HepG2 (cell line): ENCODE measurements at regions of chr10 and their contacts with region 1.

Region 1: GRCh38 chr10:46022978-46023702 is 7.3 kb downstream of the NCOA4 start:
- DNase-seq: peak; percentile 92
- ATAC-seq: peak; percentile 93
- H3K4me3 ChIP-seq: peak overlapping the region; percentile 88 to 92 (median 89)
- H3K27ac ChIP-seq: peak overlapping the region; percentile 86
- H3K4me1 ChIP-seq: peaks cover 69% of the 10 kb centered on the region
- H3K27me3 ChIP-seq: no peaks in the 10 kb centered on the region; a peak in 1 of 5 replicates
- CTCF ChIP-seq: peak; percentile 80
- EP300 ChIP-seq: no peak
- POLR2A ChIP-seq: peak; percentile 97 to 99
- RAD21 ChIP-seq: peak; percentile 68

Region 2: DNA sequence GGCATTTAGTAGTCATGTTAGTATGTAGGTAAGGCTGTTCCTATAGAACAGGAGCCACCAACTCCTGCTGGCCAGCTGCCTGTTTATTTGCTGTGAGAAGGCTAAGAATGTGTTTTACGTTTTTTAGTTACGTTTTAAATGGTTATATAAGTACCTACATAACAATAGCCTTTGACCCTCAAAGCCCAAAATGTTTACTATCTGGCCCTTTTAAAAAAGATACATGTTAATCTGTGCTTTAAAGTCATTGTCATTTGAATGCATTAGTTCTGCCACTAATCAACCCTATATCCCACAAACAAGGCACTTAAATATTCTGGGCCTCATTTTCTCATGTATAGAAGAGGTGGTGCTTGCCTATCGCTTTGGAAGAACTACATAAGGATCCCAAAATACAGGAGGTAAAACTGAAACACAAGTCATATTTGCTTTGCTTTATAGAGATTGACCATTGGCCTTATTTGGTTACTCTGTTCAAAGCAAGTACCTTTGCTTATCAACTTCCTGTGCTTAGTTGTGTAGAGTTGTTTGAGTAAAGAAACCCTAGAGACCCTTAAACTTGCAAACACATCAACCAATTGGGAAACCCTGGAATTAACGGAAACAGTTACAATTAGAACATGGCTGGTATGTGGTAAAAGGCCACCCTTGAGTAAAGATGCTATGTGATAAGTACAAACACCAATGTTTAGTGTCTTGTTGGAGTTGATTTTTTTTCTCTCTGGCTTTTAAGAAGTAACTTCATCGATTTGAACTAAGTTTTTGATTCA is 25.0 kb before region 1 on chr10:
- CTCF ChIA-PET with region 1: no interaction called
- POLR2A ChIA-PET with region 1: interaction called, 147 read pairs
- in situ Hi-C with region 1: no loop called
- intact Hi-C with region 1: loop called (anchors 1 kb)
- DNase-seq: peak; percentile 98
- ATAC-seq: peak; percentile 87
- H3K4me3 ChIP-seq: peak overlapping the region in 1 of 3 experiments; percentile 2; a peak in 1 of 6 replicates
- H3K27ac ChIP-seq: peak overlapping the region; percentile 77
- H3K4me1 ChIP-seq: peaks cover 72% of the 10 kb centered on the region
- H3K27me3 ChIP-seq: no peaks in the 10 kb centered on the region
- CTCF ChIP-seq: no peak
- EP300 ChIP-seq: peak; percentile 56 to 99; a peak in 3 of 4 replicates
- POLR2A ChIP-seq: no peak
- RAD21 ChIP-seq: no peak; the same call in 1 of the 2 replicates

Region 3: DNA sequence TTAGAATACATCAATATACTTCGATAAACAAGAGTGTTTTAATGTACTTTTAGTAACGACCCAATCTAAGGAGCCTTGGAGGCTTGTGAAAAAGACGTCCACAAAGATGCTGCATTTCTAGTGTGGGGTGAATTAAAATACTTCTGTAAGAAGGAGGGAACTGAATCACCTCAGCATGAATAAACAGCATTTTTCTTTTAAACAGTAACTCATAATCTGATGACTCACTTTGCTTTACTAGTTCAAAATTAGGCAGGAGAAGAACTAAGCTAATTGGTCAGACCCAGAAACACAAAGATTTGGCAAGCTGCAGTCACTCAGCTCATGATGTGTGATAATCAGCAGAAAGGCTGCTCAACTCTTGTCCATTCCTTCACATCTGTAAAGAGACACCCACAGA is 16.9 kb before region 1 on chr10:
- CTCF ChIA-PET with region 1: no interaction called
- POLR2A ChIA-PET with region 1: interaction called, 147 read pairs
- in situ Hi-C with region 1: no loop called
- intact Hi-C with region 1: no loop called
- DNase-seq: no peak
- ATAC-seq: no peak
- H3K4me3 ChIP-seq: no peak overlapping the region
- H3K27ac ChIP-seq: no peak overlapping the region
- H3K4me1 ChIP-seq: peaks cover 71% of the 10 kb centered on the region
- H3K27me3 ChIP-seq: no peaks in the 10 kb centered on the region
- CTCF ChIP-seq: no peak
- EP300 ChIP-seq: no peak
- POLR2A ChIP-seq: no peak
- RAD21 ChIP-seq: no peak

Region 4: DNA sequence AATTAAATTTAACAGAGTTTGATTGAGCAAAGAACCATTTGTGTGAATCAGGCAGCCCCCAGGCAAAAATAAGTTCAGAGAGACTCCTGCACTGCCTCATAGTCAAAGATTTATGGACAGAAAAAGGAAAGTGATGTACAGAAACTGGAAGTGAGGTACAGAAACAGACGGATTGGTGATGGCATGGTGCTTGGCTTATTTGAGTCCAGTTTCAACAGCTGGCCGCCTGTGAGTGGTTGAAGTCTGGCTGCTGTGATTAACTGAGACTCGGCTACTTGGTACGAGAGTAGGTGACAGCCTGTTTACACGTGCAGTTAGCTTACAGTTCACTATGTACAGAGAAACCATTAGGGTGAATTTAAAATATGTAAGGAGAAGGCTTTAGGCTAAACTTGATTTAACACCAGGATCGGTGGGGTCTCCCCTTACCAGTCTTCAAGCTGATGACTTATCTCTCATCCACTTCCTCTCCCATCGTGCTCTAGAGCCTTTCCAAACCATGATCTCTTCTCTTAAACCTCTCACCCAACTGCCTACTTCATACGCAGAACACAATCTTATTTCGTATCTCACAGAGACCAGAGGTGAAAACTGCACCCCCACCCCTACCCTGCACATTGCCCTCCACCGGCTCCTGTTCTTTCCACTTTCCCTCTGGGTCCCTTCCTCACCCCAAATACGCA is 27.9 kb after region 1 on chr10:
- CTCF ChIA-PET with region 1: no interaction called
- POLR2A ChIA-PET with region 1: interaction called, 12 read pairs
- in situ Hi-C with region 1: no loop called
- intact Hi-C with region 1: no loop called
- DNase-seq: no peak
- ATAC-seq: no peak
- H3K4me3 ChIP-seq: no peak overlapping the region
- H3K27ac ChIP-seq: peak overlapping the region; percentile 75
- H3K4me1 ChIP-seq: peaks cover 88% of the 10 kb centered on the region
- H3K27me3 ChIP-seq: no peaks in the 10 kb centered on the region
- CTCF ChIP-seq: no peak
- EP300 ChIP-seq: no peak
- POLR2A ChIP-seq: no peak
- RAD21 ChIP-seq: no peak

Region 5: DNA sequence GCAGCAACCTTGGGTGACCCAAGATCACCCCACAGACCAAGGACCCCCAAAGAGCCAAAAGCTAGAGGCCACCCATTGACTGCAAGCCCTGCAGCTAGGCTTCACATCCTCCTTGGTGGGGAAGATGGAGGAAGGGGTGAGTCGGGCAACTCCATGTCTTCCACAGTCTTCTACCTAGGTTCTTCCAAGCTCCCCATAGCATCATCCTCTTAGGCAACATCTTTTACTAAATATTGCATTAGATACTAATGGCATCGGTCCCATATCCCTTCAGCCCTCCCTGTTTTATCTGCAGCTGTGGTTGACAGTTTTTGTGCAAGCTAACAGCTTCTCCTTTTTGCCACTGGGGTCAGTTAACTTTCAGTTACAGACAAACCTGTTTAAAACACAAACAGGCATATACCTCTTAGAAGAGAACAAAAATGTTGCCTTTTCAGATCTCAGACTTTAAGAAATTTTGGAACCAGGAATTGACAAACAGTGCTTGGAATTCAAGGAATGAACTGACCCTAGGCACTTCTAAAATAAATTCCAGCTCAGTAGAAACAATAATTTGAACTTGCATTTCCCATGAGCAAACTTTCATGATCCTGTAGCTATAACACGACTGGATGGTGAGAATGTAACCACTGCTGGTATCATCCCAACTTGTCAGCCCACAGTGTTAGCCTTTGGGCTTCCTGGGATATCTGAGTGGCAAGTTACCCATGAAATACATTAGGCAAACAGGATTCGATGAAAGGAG is 56.9 kb after region 1 on chr10:
- CTCF ChIA-PET with region 1: no interaction called
- POLR2A ChIA-PET with region 1: no interaction called
- in situ Hi-C with region 1: no loop called
- intact Hi-C with region 1: no loop called
- DNase-seq: no peak
- ATAC-seq: no peak
- H3K4me3 ChIP-seq: no peak overlapping the region
- H3K27ac ChIP-seq: no peak overlapping the region
- H3K4me1 ChIP-seq: peaks cover 53% of the 10 kb centered on the region
- H3K27me3 ChIP-seq: peaks cover 0 to 2% of the 10 kb centered on the region in 2 experiments; a peak in 1 of 5 replicates
- CTCF ChIP-seq: no peak
- EP300 ChIP-seq: no peak
- POLR2A ChIP-seq: no peak
- RAD21 ChIP-seq: no peak

Region 6: DNA sequence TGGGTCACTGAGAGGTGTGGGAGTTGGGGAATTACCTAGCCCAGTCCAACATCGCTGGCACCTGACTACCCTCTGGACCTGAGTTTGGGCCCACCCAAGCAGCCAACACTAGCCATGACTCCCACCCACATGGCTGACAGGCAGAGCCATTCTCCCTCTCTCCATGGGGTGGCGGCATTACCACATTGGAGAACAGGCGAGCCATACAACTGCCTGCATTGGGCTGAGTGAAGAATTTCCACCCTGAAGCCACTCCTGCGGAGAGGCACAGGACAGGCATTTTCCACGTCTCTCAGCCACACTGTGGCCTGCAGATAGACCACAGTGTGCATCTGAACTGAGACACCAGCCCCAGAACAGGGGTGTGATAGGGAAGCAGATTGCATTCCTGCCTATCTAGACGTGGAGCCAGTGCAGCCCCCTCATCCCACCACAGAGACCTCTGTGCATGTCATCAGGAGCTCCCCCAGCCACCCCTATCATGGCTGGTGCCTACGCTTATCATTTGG is 205.5 kb after region 1 on chr10:
- CTCF ChIA-PET with region 1: no interaction called
- POLR2A ChIA-PET with region 1: no interaction called
- in situ Hi-C with region 1: no loop called
- intact Hi-C with region 1: loop called (anchors 10 kb)
- DNase-seq: peak; percentile 69
- ATAC-seq: peak; percentile 94
- H3K4me3 ChIP-seq: peak overlapping the region in 2 of 3 experiments; percentile 3 to 59; a peak in 2 of 6 replicates
- H3K27ac ChIP-seq: no peak overlapping the region
- H3K4me1 ChIP-seq: peaks cover 21% of the 10 kb centered on the region
- H3K27me3 ChIP-seq: peaks cover 0 to 25% of the 10 kb centered on the region in 2 experiments; a peak in 3 of 5 replicates
- CTCF ChIP-seq: peak; percentile 95
- EP300 ChIP-seq: no peak
- POLR2A ChIP-seq: no peak
- RAD21 ChIP-seq: peak; percentile 72